Natural killer cell (primary cell): ENCODE measurements at regions of chr17 and their contacts with region 1.

Region 1: DNA sequence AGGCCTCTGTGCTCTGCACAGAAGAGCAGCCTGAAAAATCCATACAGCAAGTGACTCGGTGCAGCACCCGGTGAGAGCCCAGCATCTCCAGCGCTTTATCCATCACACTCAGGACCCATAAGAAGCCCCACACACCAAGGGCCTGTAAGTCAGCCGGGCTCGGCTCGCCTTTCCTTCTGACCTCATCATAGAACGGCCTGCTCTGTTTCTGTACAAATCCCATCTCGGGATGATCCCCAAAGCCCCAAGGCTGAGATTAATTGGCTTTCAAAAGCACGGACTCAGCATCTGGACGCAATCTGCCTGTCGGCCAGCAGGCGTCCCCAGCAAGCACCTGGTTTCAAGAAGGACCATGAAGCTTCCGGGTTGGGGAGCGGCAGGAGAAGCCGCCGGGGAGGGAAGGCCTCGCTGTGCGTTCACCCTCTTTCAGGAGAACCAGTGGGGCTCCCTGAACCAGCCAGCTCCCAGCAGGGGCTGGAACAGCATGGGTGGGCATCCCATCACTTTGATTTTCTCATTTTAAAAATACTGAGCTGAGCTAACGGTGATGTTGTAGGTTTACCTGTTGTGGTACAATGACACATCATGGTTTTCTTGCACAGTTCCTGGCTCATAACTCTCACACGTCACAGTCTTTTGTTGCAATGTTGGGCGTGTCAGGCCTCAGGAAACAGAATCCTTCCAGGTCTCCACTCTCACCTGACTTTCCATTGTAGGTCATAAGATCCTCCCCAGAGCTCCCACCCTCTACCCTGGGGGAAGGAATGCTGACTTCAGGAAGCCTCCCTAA is 6.7 kb downstream of the CCDC57 start:
- DNase-seq: peak; percentile 75 to 91
- ATAC-seq: peak; percentile 84 to 88 (median 85)
- H3K4me3 ChIP-seq: no peak overlapping the region
- H3K4me3 Mint-ChIP-seq: peak overlapping the region; percentile 37
- H3K27ac ChIP-seq: peak overlapping the region; percentile 84
- H3K27ac Mint-ChIP-seq: peak overlapping the region; percentile 88 to 90
- H3K4me1 ChIP-seq: peaks cover 46% of the 10 kb centered on the region
- H3K4me1 Mint-ChIP-seq: peaks cover 23 to 45% of the 10 kb centered on the region in 2 donors
- H3K27me3 ChIP-seq: no peaks in the 10 kb centered on the region
- H3K27me3 Mint-ChIP-seq: no peaks in the 10 kb centered on the region
- CTCF ChIP-seq: peak; percentile 89

Region 2: GRCh38 chr17:82244413-82245140 is 38.7 kb after region 1 on chr17:
- intact Hi-C with region 1: no loop called
- DNase-seq: peak; percentile 30 to 55
- ATAC-seq: peak in 1 of 3 donors; percentile 18
- H3K4me3 ChIP-seq: no peak overlapping the region
- H3K4me3 Mint-ChIP-seq: peak overlapping the region; percentile 30
- H3K27ac ChIP-seq: no peak overlapping the region
- H3K27ac Mint-ChIP-seq: peak overlapping the region; percentile 87 to 88
- H3K4me1 ChIP-seq: peaks cover 54% of the 10 kb centered on the region
- H3K4me1 Mint-ChIP-seq: peaks cover 60 to 83% of the 10 kb centered on the region in 2 donors
- H3K27me3 ChIP-seq: no peaks in the 10 kb centered on the region
- H3K27me3 Mint-ChIP-seq: no peaks in the 10 kb centered on the region
- CTCF ChIP-seq: no peak

Region 3: DNA sequence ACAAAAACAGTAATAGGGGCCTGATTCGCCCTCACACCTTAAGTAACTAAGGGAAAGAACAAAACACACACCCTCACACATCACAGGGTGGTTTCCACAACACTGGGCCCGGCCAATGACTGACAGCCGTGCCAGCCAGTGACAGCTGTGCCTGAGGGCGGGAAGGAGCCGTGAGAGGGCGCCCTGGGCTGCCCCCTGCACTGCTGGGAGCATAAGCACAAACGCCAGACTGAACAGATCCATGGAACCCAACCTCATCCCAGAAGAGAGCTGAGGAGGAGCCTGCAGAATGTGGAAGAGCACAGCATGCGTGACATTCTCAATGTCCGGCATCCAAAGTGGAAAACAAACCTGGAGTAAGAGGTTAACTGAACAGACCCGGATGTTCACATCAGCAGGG is 51.6 kb after region 1 on chr17:
- intact Hi-C with region 1: loop called (anchors 10 kb)
- DNase-seq: peak; percentile 85 to 89
- ATAC-seq: peak; percentile 96 to 100 (median 97)
- H3K4me3 ChIP-seq: no peak overlapping the region
- H3K4me3 Mint-ChIP-seq: peak overlapping the region; percentile 88
- H3K27ac ChIP-seq: peak overlapping the region; percentile 72
- H3K27ac Mint-ChIP-seq: peak overlapping the region; percentile 100
- H3K4me1 ChIP-seq: peaks cover 12% of the 10 kb centered on the region
- H3K4me1 Mint-ChIP-seq: peaks cover 45 to 63% of the 10 kb centered on the region in 2 donors
- H3K27me3 ChIP-seq: no peaks in the 10 kb centered on the region
- H3K27me3 Mint-ChIP-seq: no peaks in the 10 kb centered on the region
- CTCF ChIP-seq: peak; percentile 16

Region 4: GRCh38 chr17:82358465-82359350 is 152.8 kb after region 1 on chr17 and contains the start of gene TEX19:
- intact Hi-C with region 1: no loop called
- DNase-seq: peak in 1 of 2 donors; percentile 25
- ATAC-seq: peak in 2 of 3 donors; percentile 53 to 54
- H3K4me3 ChIP-seq: no peak within 1 kb of the TSS
- H3K4me3 Mint-ChIP-seq: no peak within 1 kb of the TSS
- H3K27ac ChIP-seq: no peak within 1 kb of the TSS
- H3K27ac Mint-ChIP-seq: no peak within 1 kb of the TSS
- H3K4me1 ChIP-seq: peaks cover 5% of the 10 kb centered on the region
- H3K4me1 Mint-ChIP-seq: peaks cover 0 to 10% of the 10 kb centered on the region in 2 donors
- H3K27me3 ChIP-seq: no peaks in the 10 kb centered on the region
- H3K27me3 Mint-ChIP-seq: peaks cover 6 to 11% of the 10 kb centered on the region in 2 donors
- CTCF ChIP-seq: no peak
- total RNA-seq, gene TEX19: not detected